ENCODE measurements at regions of chrX and their contacts with region 1.

Region 1: GRCh38 chrX:23911126-23911835 is 3.5 kb downstream of the CXorf58 start:
- DNase-seq: no peak
- H3K4me3 ChIP-seq: no peak overlapping the region
- H3K27ac ChIP-seq: no peak overlapping the region
- H3K4me1 ChIP-seq: no peaks in the 10 kb centered on the region
- H3K27me3 ChIP-seq: no peaks in the 10 kb centered on the region
- CTCF ChIP-seq: no peak
- POLR2A ChIP-seq: no peak

Region 2: GRCh38 chrX:21993265-21993664 is 1918.0 kb before region 1 on chrX:
- intact Hi-C with region 1: loop called (anchors 5 kb)
- DNase-seq: no peak
- H3K4me3 ChIP-seq: no peak overlapping the region
- H3K27ac ChIP-seq: no peak overlapping the region
- H3K4me1 ChIP-seq: no peaks in the 10 kb centered on the region
- H3K27me3 ChIP-seq: no peaks in the 10 kb centered on the region
- CTCF ChIP-seq: no peak
- POLR2A ChIP-seq: no peak

Measured in vagina (tissue), 2 donors.